ENCODE measurements at regions of chr17 and their contacts with region 1.

Region 1: DNA sequence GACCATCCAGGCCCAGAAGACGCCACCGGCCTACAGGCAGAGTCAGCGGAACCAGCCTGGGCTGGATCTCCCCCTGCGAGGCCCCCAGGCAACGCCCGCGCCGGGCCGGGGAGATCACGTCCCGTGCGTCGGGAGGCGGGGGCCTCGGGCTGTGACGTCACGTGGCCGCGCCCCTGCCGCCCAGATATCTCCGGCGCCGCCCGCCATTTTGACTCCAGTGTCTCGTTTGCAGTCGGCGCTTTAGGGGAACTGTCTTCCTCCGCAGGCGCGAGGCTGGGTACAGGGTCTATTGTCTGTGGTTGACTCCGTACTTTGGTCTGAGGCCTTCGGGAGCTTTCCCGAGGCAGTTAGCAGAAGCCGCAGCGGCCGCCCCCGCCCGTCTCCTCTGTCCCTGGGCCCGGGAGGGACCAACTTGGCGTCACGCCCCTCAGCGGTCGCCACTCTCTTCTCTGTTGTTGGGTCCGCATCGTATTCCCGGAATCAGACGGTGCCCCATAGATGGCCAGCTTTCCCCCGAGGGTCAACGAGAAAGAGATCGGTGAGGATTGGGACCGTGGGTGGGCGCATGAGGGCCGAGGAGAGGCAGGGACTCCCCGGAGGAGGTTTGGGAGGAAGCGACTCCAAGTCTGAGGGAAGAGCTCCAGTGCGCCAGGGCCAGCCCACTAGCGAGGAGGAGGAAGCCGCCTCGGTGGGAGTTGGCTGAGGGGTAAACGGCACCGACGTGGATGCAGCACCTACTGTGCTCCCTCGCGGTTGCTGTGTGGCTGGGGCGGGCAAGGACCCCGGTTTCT is at the start of gene WSB1:
- DNase-seq: peak; percentile 94
- ATAC-seq: peak; percentile 83
- H3K4me3 Mint-ChIP-seq: peak within 1 kb of the TSS; percentile 100
- H3K27ac Mint-ChIP-seq: peak within 1 kb of the TSS; percentile 99
- H3K4me1 Mint-ChIP-seq: peaks cover 45% of the 10 kb centered on the region
- H3K27me3 Mint-ChIP-seq: no peaks in the 10 kb centered on the region
- CTCF ChIP-seq: no peak
- total RNA-seq, gene WSB1: 115 and 125 TPM in 2 replicates

Region 2: DNA sequence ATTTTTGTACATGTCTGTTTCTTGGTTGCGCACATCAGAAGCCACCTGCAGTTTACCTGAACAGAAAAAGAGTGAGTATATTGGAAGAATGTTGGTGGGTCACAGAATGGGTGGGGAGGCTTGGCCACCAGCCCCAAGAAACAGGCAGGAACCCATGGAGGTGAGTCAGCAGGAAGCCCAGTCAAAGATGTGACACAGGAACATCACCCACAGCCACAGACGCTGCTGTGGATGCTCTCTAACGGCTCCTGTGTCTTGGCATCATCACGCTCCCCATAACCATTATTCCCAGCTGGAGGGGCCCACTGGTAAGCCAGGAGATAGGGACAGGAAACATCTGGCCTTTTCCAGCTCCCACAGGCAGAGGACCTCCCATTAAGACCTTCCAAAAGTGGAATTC is 94.1 kb before region 1 on chr17:
- CTCF ChIA-PET with region 1: no interaction called
- POLR2A ChIA-PET with region 1: interaction called, 4 read pairs
- intact Hi-C with region 1: loop called (anchors 5 kb)
- DNase-seq: no peak
- ATAC-seq: no peak
- H3K4me3 Mint-ChIP-seq: no peak overlapping the region
- H3K27ac Mint-ChIP-seq: no peak overlapping the region
- H3K4me1 Mint-ChIP-seq: no peaks in the 10 kb centered on the region
- H3K27me3 Mint-ChIP-seq: no peaks in the 10 kb centered on the region
- CTCF ChIP-seq: no peak

Region 3: GRCh38 chr17:27245230-27245696 is 48.8 kb before region 1 on chr17:
- CTCF ChIA-PET with region 1: interaction called, 18 read pairs
- POLR2A ChIA-PET with region 1: interaction called, 96 read pairs
- intact Hi-C with region 1: loop called (anchors 1 kb)
- DNase-seq: peak; percentile 36
- ATAC-seq: peak; percentile 91
- H3K4me3 Mint-ChIP-seq: no peak overlapping the region
- H3K27ac Mint-ChIP-seq: no peak overlapping the region
- H3K4me1 Mint-ChIP-seq: peaks cover 28% of the 10 kb centered on the region
- H3K27me3 Mint-ChIP-seq: no peaks in the 10 kb centered on the region
- CTCF ChIP-seq: peak; percentile 27

Region 4: GRCh38 chr17:27282054-27282551 is 12.0 kb before region 1 on chr17:
- CTCF ChIA-PET with region 1: interaction called, 5 read pairs
- POLR2A ChIA-PET with region 1: interaction called, 114 read pairs
- intact Hi-C with region 1: loop called (anchors 1 kb)
- DNase-seq: no peak
- ATAC-seq: peak; percentile 87
- H3K4me3 Mint-ChIP-seq: peak overlapping the region; percentile 33
- H3K27ac Mint-ChIP-seq: peak overlapping the region; percentile 88
- H3K4me1 Mint-ChIP-seq: peaks cover 58% of the 10 kb centered on the region
- H3K27me3 Mint-ChIP-seq: no peaks in the 10 kb centered on the region
- CTCF ChIP-seq: no peak

Region 5: GRCh38 chr17:27332485-27333409 is 38.7 kb after region 1 on chr17:
- CTCF ChIA-PET with region 1: interaction called, 7 read pairs
- POLR2A ChIA-PET with region 1: interaction called, 22 read pairs
- intact Hi-C with region 1: loop called (anchors 5 kb)
- DNase-seq: peak; percentile 83
- ATAC-seq: peak; percentile 88
- H3K4me3 Mint-ChIP-seq: peak overlapping the region; percentile 86
- H3K27ac Mint-ChIP-seq: peak overlapping the region; percentile 87
- H3K4me1 Mint-ChIP-seq: peaks cover 36% of the 10 kb centered on the region
- H3K27me3 Mint-ChIP-seq: no peaks in the 10 kb centered on the region
- CTCF ChIP-seq: no peak

Region 6: GRCh38 chr17:27353461-27354050 is 59.5 kb after region 1 on chr17:
- CTCF ChIA-PET with region 1: interaction called, 3 read pairs
- POLR2A ChIA-PET with region 1: interaction called, 4 read pairs
- intact Hi-C with region 1: loop called (anchors 1 kb)
- DNase-seq: peak; percentile 90
- ATAC-seq: peak; percentile 87
- H3K4me3 Mint-ChIP-seq: peak overlapping the region; percentile 89
- H3K27ac Mint-ChIP-seq: peak overlapping the region; percentile 83
- H3K4me1 Mint-ChIP-seq: peaks cover 22% of the 10 kb centered on the region
- H3K27me3 Mint-ChIP-seq: no peaks in the 10 kb centered on the region
- CTCF ChIP-seq: peak; percentile 50

Region 7: DNA sequence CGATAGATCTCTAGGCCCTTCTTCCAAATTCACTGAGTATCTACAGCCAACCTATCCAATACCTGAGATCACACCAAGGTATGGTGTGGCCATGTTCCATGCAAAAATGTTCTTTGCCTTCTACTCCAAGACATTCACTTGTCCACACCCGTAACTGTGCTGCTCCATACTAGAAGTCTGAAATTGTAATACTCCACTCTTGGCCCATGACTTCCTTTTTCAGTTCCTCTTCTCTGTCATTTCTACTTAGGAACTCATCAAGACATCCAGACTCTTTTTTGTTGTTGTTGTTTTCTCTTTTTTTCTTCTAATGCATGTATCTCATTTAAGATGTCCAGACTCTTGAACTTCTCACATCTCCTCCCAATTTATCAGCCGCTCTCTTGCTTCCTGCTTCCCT is 119.7 kb after region 1 on chr17:
- CTCF ChIA-PET with region 1: no interaction called
- POLR2A ChIA-PET with region 1: no interaction called
- intact Hi-C with region 1: no loop called
- DNase-seq: no peak
- ATAC-seq: peak; percentile 52
- H3K4me3 Mint-ChIP-seq: no peak overlapping the region
- H3K27ac Mint-ChIP-seq: no peak overlapping the region
- H3K4me1 Mint-ChIP-seq: peaks cover 5% of the 10 kb centered on the region
- H3K27me3 Mint-ChIP-seq: peaks cover 3% of the 10 kb centered on the region
- CTCF ChIP-seq: no peak

Region 8: DNA sequence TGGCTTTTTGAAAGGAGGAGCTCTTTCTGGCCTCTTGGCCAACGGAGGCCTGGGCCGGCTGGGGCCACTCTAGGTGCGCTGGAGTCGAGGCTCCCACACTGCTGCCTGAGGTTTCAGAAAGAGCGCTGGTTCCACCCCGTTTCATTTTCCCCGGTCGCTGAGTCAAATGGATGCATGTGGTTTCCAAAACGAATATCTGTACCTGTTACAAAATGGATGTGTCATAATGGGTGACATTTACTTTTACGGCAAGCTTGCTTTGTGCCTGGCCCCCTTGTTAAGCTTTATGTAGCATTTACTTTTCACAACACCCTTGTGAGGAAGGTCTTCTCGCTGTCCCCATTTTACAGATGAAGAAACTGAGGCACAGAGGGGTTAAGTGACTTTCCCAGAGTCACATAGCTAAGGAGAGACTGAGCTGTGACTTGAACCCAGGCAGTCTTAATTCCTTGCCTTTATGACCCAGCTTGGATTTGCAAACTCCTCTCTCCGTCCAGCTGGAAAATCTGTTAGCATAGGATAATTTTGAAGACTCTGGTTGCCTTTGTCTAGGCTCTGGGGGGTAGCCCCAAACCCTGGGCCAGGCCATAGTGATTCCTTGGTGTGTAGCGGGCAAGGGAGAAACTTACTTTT is 172.8 kb after region 1 on chr17:
- CTCF ChIA-PET with region 1: no interaction called
- POLR2A ChIA-PET with region 1: interaction called, 10 read pairs
- intact Hi-C with region 1: no loop called
- DNase-seq: peak; percentile 29
- ATAC-seq: peak; percentile 75
- H3K4me3 Mint-ChIP-seq: peak overlapping the region; percentile 42
- H3K27ac Mint-ChIP-seq: peak overlapping the region; percentile 54
- H3K4me1 Mint-ChIP-seq: peaks cover 67% of the 10 kb centered on the region
- H3K27me3 Mint-ChIP-seq: no peaks in the 10 kb centered on the region
- CTCF ChIP-seq: no peak

Measured in activated B cell treated with CpG ODN at 0.5 μM for 24 hours (primary cell).